ENCODE measurements at regions of chr11 and their contacts with region 1.

Region 1: GRCh38 chr11:72015511-72016171 is 16.9 kb downstream of the IL18BP start:
- DNase-seq: peak; percentile 53
- ATAC-seq: no peak
- H3K4me3 ChIP-seq: no peak overlapping the region
- H3K27ac ChIP-seq: no peak overlapping the region
- H3K4me1 ChIP-seq: peaks cover 13% of the 10 kb centered on the region
- H3K27me3 ChIP-seq: no peaks in the 10 kb centered on the region
- CTCF ChIP-seq: peak; percentile 13

Region 2: DNA sequence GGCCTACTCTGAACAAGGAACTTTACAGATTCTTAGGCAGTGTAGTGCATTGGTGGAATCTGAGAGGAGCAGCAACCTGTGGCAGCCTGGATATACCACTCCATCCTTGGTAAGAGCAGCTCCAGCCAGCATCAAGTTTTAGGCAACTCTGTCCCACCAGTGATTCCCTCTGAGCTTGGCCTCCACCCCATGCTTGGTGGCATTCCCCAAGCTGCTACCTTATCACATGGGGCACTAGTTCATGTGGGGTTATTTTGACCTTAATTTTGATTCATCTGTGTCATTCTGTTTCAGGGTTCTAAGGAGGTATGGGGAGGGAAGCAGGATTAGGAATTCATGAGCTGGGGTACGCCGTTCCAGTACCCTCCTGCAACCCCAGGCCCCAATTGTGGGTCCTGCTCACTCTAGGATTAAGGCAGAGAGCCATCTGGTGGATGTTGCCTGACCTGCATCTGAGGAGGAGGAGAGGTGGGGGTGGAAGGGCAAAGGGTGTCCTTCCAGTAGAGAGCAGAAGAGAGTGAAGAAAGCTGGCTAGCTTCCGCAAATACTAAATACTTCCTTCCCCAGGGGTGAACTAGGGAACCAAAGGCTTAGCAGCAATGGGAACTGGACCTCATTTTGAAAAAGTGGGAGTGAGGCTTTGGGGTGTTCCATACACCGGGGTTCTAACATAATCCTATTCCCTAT is 75.5 kb after region 1 on chr11:
- intact Hi-C with region 1: loop called (anchors 5 kb)
- DNase-seq: peak; percentile 74
- ATAC-seq: peak; percentile 98
- H3K4me3 ChIP-seq: no peak overlapping the region
- H3K27ac ChIP-seq: peak overlapping the region; percentile 19
- H3K4me1 ChIP-seq: peaks cover 9% of the 10 kb centered on the region
- H3K27me3 ChIP-seq: no peaks in the 10 kb centered on the region
- CTCF ChIP-seq: peak; percentile 79